ENCODE measurements at regions of chr17 and their contacts with region 1.

Region 1: GRCh38 chr17:1229432-1229899 is 40.8 kb upstream of the BHLHA9 start:
- DNase-seq: peak; percentile 95
- CTCF ChIP-seq: no peak

Region 2: DNA sequence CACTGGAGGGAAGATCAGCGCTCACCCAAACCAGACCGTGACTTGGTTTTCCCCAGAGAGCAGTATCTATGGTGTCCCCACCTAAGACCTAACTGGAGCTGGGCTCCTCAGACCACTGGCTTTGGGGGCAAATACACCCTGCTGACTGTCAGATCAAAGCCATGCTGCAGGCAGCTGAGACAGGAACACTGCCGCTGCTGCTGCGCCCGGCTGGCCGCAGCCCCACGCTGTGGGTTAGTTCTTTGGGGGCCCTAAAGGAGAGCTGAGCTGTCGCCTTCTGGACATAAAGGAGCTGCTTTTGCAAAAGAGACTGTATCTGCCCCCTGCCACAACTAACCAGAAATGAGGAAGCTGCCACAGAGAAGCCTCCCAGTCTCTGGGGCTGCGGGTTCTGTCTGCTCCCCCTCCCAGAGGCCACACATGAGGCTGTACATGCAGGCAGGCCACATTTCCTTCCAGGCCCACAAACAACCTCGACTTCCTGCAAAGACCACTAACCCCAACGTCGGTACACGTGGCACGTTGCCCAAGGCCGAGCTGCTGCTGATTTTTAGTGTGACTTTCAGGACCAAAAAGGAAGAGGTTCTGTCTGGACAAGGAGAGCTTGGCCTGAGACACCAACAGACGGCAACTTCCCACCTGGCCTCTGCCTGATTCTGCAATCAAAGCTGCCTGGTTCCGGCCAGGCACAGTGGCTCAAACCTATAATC is 31.5 kb before region 1 on chr17:
- CTCF ChIA-PET with region 1: interaction called, 12 read pairs
- POLR2A ChIA-PET with region 1: interaction called, 8 read pairs
- DNase-seq: peak; percentile 85
- CTCF ChIP-seq: no peak

Region 3: GRCh38 chr17:1216217-1217088 is 13.0 kb before region 1 on chr17:
- CTCF ChIA-PET with region 1: interaction called, 14 read pairs
- POLR2A ChIA-PET with region 1: interaction called, 5 read pairs
- DNase-seq: peak; percentile 53
- CTCF ChIP-seq: no peak

Measured in GM10248 (cell line).